Left cardiac atrium (tissue), 4 donors: ENCODE measurements at regions of chr11 and their contacts with region 1.

Region 1: GRCh38 chr11:25981998-25982397 is 349.9 kb upstream of the ANO3 start:
- DNase-seq: no peak
- ATAC-seq: peak; percentile 79 to 87

Region 2: GRCh38 chr11:26134481-26135355 is 152.7 kb after region 1 on chr11:
- intact Hi-C with region 1: loop called (anchors 2 to 5 kb)
- DNase-seq: no peak
- ATAC-seq: no peak

Region 3: DNA sequence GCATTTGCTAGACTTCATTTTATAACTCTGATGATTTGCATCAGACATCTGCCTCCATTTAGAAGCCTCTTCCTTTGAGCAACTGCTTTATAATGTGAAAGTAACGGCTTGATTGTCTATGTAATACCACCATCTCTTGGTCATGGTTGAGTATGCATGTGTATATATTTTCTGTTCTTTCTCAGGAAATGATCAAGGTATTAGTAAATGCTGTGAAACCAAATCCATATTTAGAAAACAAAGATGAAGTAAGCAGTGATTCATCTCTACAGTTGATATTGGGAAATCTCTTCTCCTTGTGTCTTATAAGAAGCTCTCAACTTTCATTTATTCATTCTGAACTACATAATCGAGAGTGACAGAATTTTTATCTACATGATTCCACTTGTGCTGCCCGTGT is 245.3 kb after region 1 on chr11:
- intact Hi-C with region 1: loop called in 1 of 2 experiments (anchors 5 kb)
- DNase-seq: no peak
- ATAC-seq: peak; percentile 59 to 63

Region 4: GRCh38 chr11:26276798-26277424 is 294.9 kb after region 1 on chr11:
- intact Hi-C with region 1: loop called (anchors 5 to 10 kb)
- DNase-seq: peak; percentile 24
- ATAC-seq: peak in 1 of 2 donors; percentile 65